ENCODE measurements at regions of chr10 and their contacts with region 1.

Region 1: GRCh38 chr10:59625721-59626522 is 83.7 kb downstream of the SLC16A9 start:
- H3K4me3 ChIP-seq: no peak overlapping the region
- H3K27ac ChIP-seq: no peak overlapping the region
- H3K4me1 ChIP-seq: no peaks in the 10 kb centered on the region
- CTCF ChIP-seq: peak; percentile 91

Region 2: GRCh38 chr10:59240582-59241183 is 385.2 kb before region 1 on chr10:
- CTCF ChIA-PET with region 1: interaction called, 28 read pairs
- POLR2A ChIA-PET with region 1: no interaction called
- H3K4me3 ChIP-seq: no peak overlapping the region
- H3K27ac ChIP-seq: no peak overlapping the region
- H3K4me1 ChIP-seq: no peaks in the 10 kb centered on the region
- CTCF ChIP-seq: no peak

Region 3: GRCh38 chr10:59333701-59334100 is 292.2 kb before region 1 on chr10:
- CTCF ChIA-PET with region 1: no interaction called
- POLR2A ChIA-PET with region 1: no interaction called
- H3K4me3 ChIP-seq: no peak overlapping the region
- H3K27ac ChIP-seq: no peak overlapping the region
- H3K4me1 ChIP-seq: 0 out of 2 replicates have a peak, but pooled peaks cover 2% of the 10 kb centered on the region
- CTCF ChIP-seq: no peak

Region 4: GRCh38 chr10:59611043-59611442 is 14.9 kb before region 1 on chr10:
- CTCF ChIA-PET with region 1: interaction called, 16 read pairs
- POLR2A ChIA-PET with region 1: no interaction called
- H3K4me3 ChIP-seq: no peak overlapping the region
- H3K27ac ChIP-seq: no peak overlapping the region
- H3K4me1 ChIP-seq: peaks cover 11% of the 10 kb centered on the region; the same call in 1 of the 2 replicates
- CTCF ChIP-seq: peak; percentile 15; the same call in 1 of the 2 replicates

Region 5: GRCh38 chr10:59830601-59831259 is 204.8 kb after region 1 on chr10:
- CTCF ChIA-PET with region 1: interaction called, 31 read pairs
- POLR2A ChIA-PET with region 1: no interaction called
- H3K4me3 ChIP-seq: no peak overlapping the region
- H3K27ac ChIP-seq: no peak overlapping the region
- H3K4me1 ChIP-seq: peaks cover 3% of the 10 kb centered on the region; the same call in 1 of the 2 replicates
- CTCF ChIP-seq: peak; percentile 25; the same call in 1 of the 2 replicates

Region 6: GRCh38 chr10:60032723-60033122 is 406.8 kb after region 1 on chr10:
- CTCF ChIA-PET with region 1: interaction called, 13 read pairs
- POLR2A ChIA-PET with region 1: no interaction called
- H3K4me3 ChIP-seq: no peak overlapping the region
- H3K27ac ChIP-seq: no peak overlapping the region
- H3K4me1 ChIP-seq: no peaks in the 10 kb centered on the region
- CTCF ChIP-seq: peak; percentile 40; the same call in 1 of the 2 replicates

Measured in HEK293 (cell line).